Astrocyte of the cerebellum (primary cell): ENCODE measurements at regions of chr17 and their contacts with region 1.

Region 1: DNA sequence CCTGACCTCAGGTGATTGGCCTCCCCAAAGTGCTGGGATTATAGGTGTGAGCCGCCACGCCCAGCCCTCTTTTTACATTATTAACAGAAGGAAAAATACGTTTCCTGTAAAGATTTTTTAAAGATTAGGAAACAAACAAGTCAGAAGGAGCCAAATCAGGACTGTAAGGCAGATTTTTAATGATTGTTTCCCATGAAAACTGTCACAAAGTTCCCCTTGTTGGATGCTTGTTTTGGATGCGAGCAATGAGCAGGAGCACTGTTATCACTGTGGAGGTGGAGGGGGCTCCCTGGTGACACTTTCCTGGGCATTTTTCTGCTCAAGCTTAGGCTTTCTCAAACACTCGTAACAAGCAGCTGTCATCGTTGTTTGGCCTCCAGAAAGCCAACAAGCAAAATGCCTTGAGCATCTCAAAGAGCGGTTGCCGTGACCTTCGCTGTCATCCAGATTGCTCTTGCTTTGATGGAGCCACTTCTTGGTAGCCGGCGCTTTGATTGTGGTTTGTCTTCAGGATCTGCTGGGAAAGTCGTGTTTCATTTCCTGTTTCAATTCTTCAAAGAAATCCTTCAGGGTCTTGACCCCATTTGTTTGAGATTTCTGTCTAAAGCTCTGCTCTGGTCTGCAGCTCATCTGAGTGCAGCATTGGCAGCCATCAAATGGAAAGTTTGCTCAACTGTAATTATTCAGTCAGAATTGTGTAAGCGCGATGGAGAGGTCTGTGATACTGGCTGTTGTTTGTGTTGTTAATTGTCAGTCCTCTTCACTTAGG is 128.7 kb downstream of the RPTOR start:
- DNase-seq: no peak
- H3K4me3 ChIP-seq: no peak overlapping the region
- CTCF ChIP-seq: no peak

Region 2: DNA sequence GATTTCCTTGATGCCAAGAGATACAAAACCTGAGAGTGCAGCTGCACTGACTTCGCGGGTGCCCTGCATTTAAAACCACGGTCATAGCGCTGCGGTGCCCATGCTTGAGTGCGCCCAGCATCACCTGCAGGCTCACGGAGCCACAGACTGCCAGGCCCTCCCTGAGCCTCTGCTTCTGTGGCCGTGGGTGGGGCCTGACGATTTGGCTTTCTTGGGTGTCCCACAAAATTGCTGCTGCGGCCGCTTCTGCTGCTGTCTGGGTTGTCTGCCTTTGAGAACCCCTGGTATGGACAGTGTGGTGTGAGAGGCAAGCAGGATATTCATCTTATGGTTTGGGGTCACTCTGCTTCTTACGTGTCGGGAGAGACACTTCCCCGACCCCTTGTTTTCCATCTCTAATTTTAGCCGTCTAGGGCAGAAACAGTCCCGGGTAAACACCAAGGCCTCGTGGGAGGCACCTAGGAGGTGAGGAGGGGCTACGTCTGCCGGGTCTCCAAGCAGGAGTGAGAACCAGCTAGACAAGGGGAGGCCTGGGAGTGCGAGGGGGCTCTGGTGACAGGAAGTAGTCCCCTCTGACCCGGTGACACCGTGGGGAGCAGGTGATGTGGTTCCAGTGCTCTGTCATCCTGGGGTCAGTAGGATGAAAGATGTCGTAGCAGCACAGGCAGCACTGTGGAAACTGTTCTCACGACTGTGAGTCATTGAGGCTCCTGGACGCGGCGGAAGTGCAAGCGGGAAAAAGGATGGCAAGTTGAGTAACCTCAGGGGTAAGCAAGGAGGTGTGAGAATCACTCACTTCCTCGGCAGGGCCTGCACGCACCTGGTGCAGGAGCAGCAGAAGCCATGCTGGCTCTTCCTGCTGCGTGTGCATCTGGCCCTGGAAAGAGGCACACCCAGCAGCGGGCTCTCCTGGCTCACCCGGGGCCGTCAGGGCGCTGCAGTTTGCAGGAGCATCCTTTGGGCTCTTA is 47.6 kb after region 1 on chr17:
- in situ Hi-C with region 1: loop called (anchors 5 kb)
- DNase-seq: no peak
- H3K4me3 ChIP-seq: no peak overlapping the region
- CTCF ChIP-seq: no peak

Region 3: GRCh38 chr17:80761110-80761871 is 88.0 kb after region 1 on chr17:
- in situ Hi-C with region 1: loop called (anchors 5 kb)
- DNase-seq: peak; percentile 79
- H3K4me3 ChIP-seq: no peak overlapping the region
- CTCF ChIP-seq: no peak